Left lung (tissue), 14 donors: ENCODE measurements at regions of chr1 and their contacts with region 1.

Region 1: GRCh38 chr1:53393325-53393792 is 65.5 kb upstream of the LRP8 start:
- DNase-seq: peak; percentile 62 to 92 (median 76)
- ATAC-seq: peak; percentile 94
- H3K4me3 ChIP-seq: no peak overlapping the region
- H3K27ac ChIP-seq: no peak overlapping the region
- H3K4me1 ChIP-seq: no peaks in the 10 kb centered on the region
- H3K27me3 ChIP-seq: peaks cover 0 to 20% of the 10 kb centered on the region in 2 donors
- CTCF ChIP-seq: peak; percentile 93 to 95

Region 2: DNA sequence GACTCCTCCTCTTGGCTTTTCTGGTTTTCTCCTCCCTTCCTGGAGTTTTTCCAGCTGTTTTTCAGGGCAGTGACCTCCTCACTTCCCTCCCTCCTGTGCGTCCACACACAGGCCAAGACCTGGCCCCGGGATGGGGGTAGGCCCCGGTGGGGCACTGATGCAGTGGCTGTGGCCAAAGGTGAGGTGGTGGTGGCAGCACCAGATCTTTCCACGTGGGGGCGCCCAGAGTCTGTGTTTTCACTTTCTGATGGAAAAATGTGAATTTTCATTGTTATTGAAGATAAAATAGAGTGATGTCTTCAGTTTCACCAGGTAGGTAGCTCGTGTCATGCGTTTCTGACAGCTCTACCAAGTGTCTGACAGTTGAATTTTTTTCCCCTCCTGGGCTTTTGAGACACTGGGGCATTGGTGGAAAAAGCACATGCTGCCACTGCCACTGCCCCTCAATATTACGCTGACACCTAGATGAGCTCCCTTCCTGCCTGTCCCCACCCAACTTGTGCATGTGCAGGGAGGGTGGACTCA is 115.1 kb before region 1 on chr1:
- intact Hi-C with region 1: loop called (anchors 2 to 5 kb)
- DNase-seq: peak; percentile 40 to 88 (median 52)
- ATAC-seq: peak; percentile 81
- H3K4me3 ChIP-seq: no peak overlapping the region
- H3K27ac ChIP-seq: no peak overlapping the region
- H3K4me1 ChIP-seq: no peaks in the 10 kb centered on the region
- H3K27me3 ChIP-seq: no peaks in the 10 kb centered on the region
- CTCF ChIP-seq: peak; percentile 83 to 88